ENCODE measurements at regions of chr5 and their contacts with region 1.

Region 1: GRCh38 chr5:167294901-167295680 is 996.4 kb upstream of the WWC1 start:
- DNase-seq: peak; percentile 64 to 93
- H3K4me3 ChIP-seq: peak overlapping the region; percentile 35; the same call in 1 of the 2 replicates
- H3K27ac ChIP-seq: peak overlapping the region; percentile 98
- H3K4me1 ChIP-seq: peaks cover 37% of the 10 kb centered on the region
- H3K27me3 ChIP-seq: no peaks in the 10 kb centered on the region
- CTCF ChIP-seq: no peak

Region 2: DNA sequence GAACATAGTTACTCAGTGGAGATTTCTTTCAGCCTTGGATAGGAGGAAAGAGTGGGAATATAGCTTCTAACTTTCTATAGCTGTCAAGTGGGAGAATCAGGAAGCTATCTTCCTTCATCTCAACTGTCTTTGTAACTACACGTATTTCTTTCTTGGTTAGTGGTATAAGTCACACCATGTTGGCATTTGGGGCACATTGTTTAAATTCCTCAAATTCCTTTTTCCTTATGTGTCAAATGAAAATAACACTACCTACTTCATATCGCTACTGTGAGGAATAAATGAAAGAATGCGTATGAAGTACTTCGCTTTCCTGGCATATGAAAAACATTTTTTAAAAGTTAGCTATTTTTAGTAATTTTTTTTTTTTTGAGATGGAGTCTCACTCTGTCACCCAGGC is 86.2 kb before region 1 on chr5:
- CTCF ChIA-PET with region 1: no interaction called
- POLR2A ChIA-PET with region 1: no interaction called
- intact Hi-C with region 1: loop called (anchors 1 kb)
- DNase-seq: peak in 1 of 2 experiments; percentile 52
- H3K4me3 ChIP-seq: no peak overlapping the region
- H3K27ac ChIP-seq: no peak overlapping the region
- H3K4me1 ChIP-seq: no peaks in the 10 kb centered on the region
- H3K27me3 ChIP-seq: no peaks in the 10 kb centered on the region
- CTCF ChIP-seq: no peak

Region 3: DNA sequence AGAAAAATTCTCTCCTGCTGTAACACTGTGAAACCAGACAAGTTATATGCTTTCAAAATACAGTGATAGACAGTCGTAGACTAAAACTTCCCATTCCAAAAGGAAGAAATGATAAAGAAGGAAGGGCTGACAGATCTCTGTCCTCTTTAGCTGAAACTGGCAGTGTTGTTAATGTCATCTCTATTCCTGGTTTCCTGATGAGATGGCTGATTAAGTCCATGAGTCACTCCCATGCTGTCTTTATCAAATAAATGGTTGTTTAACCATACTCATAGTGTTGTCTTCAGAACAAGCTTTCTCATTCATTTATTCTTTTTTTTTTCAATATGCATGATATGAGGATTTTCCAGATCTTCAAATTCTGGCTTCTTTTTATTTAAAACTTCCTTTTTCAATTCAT is 44.1 kb after region 1 on chr5:
- CTCF ChIA-PET with region 1: no interaction called
- POLR2A ChIA-PET with region 1: no interaction called
- intact Hi-C with region 1: loop called (anchors 1 kb)
- DNase-seq: no peak
- H3K4me3 ChIP-seq: no peak overlapping the region
- H3K27ac ChIP-seq: no peak overlapping the region
- H3K4me1 ChIP-seq: no peaks in the 10 kb centered on the region
- H3K27me3 ChIP-seq: no peaks in the 10 kb centered on the region
- CTCF ChIP-seq: no peak

Region 4: DNA sequence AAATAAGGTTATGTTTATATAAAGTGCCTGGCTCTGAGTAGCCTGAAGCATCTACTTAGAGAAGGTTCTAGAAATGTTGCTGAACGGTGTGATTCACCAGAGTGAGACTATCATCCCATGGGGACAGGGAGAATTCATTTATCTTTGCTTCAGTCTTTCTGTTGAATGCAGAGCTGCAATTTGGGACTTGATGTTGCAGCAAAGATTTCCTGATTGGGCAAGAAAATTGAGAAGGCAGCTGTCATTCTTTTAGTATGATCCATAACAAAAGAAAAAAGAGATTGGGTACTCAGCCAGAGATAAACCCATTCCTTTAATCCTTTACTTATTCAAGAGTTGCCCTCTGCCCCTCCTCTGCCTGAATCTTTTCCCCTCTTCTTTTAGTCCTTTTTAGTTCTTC is 540.1 kb after region 1 on chr5:
- CTCF ChIA-PET with region 1: no interaction called
- POLR2A ChIA-PET with region 1: no interaction called
- intact Hi-C with region 1: no loop called
- DNase-seq: no peak
- H3K4me3 ChIP-seq: no peak overlapping the region
- H3K27ac ChIP-seq: no peak overlapping the region
- H3K4me1 ChIP-seq: no peaks in the 10 kb centered on the region
- H3K27me3 ChIP-seq: 0 out of 2 replicates have a peak, but pooled peaks cover 7% of the 10 kb centered on the region
- CTCF ChIP-seq: no peak